ENCODE measurements at regions of chr15 and their contacts with region 1.

Region 1: DNA sequence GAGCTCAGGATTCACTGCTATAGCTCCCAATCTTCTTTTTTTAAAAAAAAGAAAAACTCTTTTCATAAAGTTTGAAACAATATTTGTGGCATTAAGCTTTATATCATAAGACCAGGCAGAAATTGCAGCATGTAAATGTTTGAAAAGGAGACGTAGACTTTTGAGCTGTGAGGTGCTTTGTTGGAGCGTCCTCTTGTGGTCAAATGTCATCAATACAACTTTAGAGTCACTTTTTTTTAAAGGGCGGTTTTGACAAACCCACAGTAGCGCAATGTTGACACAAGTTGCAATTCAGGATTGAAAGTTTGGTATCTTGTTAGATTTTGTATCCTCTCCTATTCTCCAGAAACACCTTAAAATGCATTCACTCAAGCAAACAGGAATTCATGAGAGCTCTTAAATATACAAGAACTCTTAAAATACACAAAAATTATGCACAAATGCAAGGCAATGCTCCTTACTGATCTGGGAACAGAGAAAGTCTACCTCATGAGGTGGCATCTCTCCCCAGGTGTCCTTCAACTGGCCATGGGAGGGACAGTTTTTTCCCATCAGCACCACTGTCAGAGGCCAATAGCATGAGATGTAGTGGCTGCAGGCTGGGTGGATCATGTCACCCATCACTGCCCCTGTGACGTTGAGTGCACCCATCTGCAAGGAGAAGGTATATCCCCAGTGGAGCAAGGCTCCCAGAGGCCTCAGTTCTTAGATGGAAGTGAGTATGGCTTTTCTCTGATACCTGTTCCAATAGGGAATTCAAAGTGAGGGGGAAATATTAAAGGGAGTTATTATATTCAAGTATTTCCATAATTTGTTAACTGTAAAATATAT is 70.7 kb downstream of the ANXA2 start:
- DNase-seq: peak in 1 of 10 donors; percentile 12

Region 2: GRCh38 chr15:59688841-59689625 is 638.0 kb before region 1 on chr15 and contains the start of gene BNIP2:
- intact Hi-C with region 1: loop called (anchors 10 kb)
- DNase-seq: peak; percentile 90 to 99 (median 94)

Region 3: DNA sequence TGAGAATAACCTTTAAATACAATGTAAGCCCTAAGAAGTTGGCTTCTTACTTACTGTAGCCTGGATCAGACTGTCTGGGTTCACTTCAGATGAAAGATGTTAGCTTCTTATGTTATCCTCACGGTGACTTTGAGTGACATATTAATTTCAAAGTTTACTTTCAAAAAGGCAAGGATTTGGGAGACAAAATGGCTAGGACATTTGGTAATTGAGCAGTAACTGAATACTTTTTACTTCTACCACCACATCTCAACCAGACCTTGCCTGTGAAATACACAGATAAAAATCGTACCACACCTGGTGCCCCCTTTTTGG is 601.9 kb before region 1 on chr15:
- intact Hi-C with region 1: loop called (anchors 5 kb)
- DNase-seq: no peak

Region 4: GRCh38 chr15:59751552-59752413 is 575.3 kb before region 1 on chr15:
- intact Hi-C with region 1: loop called (anchors 10 kb)
- DNase-seq: no peak

Region 5: GRCh38 chr15:60370869-60371700 is 44.0 kb after region 1 on chr15:
- intact Hi-C with region 1: no loop called
- DNase-seq: peak in 2 of 10 donors; percentile 16 to 65